Left colon (tissue), 2 donors: ENCODE measurements at regions of chr18 and their contacts with region 1.

Region 1: DNA sequence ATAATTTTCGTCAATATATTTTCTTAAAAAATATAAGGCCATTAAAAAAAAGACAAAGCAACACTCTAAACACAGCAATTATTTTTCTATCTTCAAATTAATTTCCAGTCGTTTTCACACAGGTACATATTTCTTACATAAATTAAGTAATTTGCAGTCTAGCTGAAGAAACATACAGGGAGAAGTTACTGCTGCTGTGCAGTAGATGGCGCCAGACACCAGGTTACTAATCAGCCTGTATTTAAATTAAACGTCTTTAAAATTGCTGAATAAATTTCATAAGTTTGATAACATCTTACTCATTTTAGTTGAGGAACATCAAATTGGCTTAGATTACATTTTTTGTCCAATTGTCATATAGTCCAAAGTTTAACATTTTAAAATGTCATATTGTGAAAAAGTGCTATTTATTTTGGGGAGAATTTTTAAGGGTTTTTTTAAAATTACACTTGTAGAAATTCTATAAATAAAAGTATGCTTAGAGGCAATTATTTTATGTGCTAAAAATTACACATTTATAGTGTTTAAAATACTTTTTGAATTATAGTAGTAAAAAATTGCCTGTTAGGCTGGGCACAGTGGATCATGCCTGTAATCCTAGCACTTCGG is 88.4 kb downstream of the PMAIP1 start:
- DNase-seq: peak in 1 of 2 donors; percentile 32
- ATAC-seq: no peak

Region 2: DNA sequence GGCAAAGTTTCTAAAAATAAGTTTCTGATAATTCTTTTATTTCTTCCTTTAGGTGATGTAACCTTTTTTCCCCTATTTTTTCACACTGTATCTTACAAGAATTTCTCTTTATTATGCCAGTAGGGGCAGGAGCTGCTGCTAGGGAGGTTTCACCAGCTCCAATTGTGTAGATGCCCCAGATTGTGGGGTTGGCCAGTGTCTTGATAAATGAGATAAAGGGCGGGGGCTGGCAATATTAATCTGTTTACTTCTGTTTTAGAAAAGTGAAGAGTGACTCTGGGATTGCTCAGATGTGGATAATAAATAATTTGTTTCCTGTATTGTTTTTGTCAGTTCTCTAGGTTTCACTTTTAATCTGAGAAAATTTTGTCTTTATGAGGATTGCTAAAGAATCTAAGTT is 194.0 kb after region 1 on chr18:
- intact Hi-C with region 1: no loop called
- DNase-seq: no peak
- ATAC-seq: no peak

Region 3: GRCh38 chr18:60554967-60555366 is 566.8 kb after region 1 on chr18:
- intact Hi-C with region 1: loop called in 1 of 2 experiments (anchors 5 kb)
- DNase-seq: no peak
- ATAC-seq: no peak